Caco-2 (cell line): ENCODE measurements at regions of chr7 and their contacts with region 1.

Region 1: DNA sequence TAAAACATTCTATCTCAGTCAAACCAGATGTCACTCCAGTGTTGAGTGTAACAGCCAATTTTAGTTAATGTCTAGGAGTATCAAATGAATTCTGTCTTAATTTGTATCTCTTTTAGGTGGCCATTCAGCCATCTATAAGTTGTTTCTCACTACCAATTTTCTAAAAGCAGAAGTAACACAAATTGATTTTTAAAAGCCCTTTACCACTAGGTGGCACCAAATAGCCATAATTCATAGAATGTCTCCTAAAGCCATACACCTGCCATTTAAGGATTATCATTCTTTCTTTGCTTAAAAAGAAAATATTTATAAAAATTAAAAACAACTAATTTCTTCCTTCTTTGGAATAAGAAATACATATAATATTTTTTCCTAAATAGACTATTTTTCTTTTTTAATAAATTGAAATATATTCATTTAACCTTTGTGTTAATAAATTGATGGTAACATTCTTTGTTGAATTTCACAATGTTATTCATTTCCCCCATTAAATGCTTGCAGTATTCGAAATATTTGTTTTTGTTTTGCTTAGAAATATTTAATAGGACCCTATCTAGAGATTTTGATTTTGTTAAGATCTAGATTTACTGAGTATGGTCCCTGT is 107.8 kb upstream of the PPP1R3A start:
- DNase-seq: peak in 1 of 2 experiments; percentile 67
- H3K4me3 ChIP-seq: no peak overlapping the region
- H3K4me3 Mint-ChIP-seq: no peak overlapping the region
- H3K27ac Mint-ChIP-seq: no peak overlapping the region
- H3K4me1 ChIP-seq: no peaks in the 10 kb centered on the region
- H3K4me1 Mint-ChIP-seq: no peaks in the 10 kb centered on the region
- H3K27me3 ChIP-seq: no peaks in the 10 kb centered on the region
- H3K27me3 Mint-ChIP-seq: peaks cover 7% of the 10 kb centered on the region
- CTCF ChIP-seq: peak; percentile 49 to 71

Region 2: GRCh38 chr7:113774182-113774807 is 252.3 kb before region 1 on chr7:
- CTCF ChIA-PET with region 1: no interaction called
- POLR2A ChIA-PET with region 1: no interaction called
- intact Hi-C with region 1: loop called (anchors 5 kb)
- DNase-seq: peak in 1 of 2 experiments; percentile 6
- H3K4me3 ChIP-seq: no peak overlapping the region
- H3K4me3 Mint-ChIP-seq: no peak overlapping the region
- H3K27ac Mint-ChIP-seq: no peak overlapping the region
- H3K4me1 ChIP-seq: no peaks in the 10 kb centered on the region
- H3K4me1 Mint-ChIP-seq: no peaks in the 10 kb centered on the region
- H3K27me3 ChIP-seq: no peaks in the 10 kb centered on the region
- H3K27me3 Mint-ChIP-seq: no peaks in the 10 kb centered on the region
- CTCF ChIP-seq: peak; percentile 50 to 76

Region 3: DNA sequence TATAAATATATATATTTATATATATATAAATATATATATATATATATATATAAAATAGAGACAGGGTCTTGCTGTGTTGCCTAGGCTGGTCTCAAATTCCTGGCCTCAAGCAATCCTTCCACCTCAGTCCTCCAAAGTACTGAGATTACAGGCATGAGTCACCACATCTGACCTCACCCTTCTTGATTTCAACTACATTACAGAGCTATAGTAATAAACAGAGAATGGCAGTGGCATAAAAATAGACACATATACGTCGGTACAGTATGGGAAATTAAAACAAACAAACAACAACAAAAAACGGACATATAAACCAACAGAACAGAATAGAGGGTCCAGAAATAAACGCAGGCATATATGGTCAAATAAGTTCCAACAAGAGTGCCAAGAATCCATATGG is 30.2 kb before region 1 on chr7:
- CTCF ChIA-PET with region 1: no interaction called
- POLR2A ChIA-PET with region 1: no interaction called
- intact Hi-C with region 1: no loop called
- DNase-seq: no peak
- H3K4me3 ChIP-seq: no peak overlapping the region
- H3K4me3 Mint-ChIP-seq: no peak overlapping the region
- H3K27ac Mint-ChIP-seq: no peak overlapping the region
- H3K4me1 ChIP-seq: no peaks in the 10 kb centered on the region
- H3K4me1 Mint-ChIP-seq: no peaks in the 10 kb centered on the region
- H3K27me3 ChIP-seq: no peaks in the 10 kb centered on the region
- H3K27me3 Mint-ChIP-seq: no peaks in the 10 kb centered on the region
- CTCF ChIP-seq: no peak

Region 4: GRCh38 chr7:114217026-114217425 is 190.4 kb after region 1 on chr7:
- CTCF ChIA-PET with region 1: no interaction called
- POLR2A ChIA-PET with region 1: no interaction called
- intact Hi-C with region 1: loop called (anchors 5 kb)
- DNase-seq: no peak
- H3K4me3 ChIP-seq: no peak overlapping the region
- H3K4me3 Mint-ChIP-seq: no peak overlapping the region
- H3K27ac Mint-ChIP-seq: no peak overlapping the region
- H3K4me1 ChIP-seq: no peaks in the 10 kb centered on the region
- H3K4me1 Mint-ChIP-seq: no peaks in the 10 kb centered on the region
- H3K27me3 ChIP-seq: no peaks in the 10 kb centered on the region
- H3K27me3 Mint-ChIP-seq: no peaks in the 10 kb centered on the region
- CTCF ChIP-seq: peak; percentile 21 to 27

Region 5: GRCh38 chr7:114405427-114405826 is 378.8 kb after region 1 on chr7:
- CTCF ChIA-PET with region 1: no interaction called
- POLR2A ChIA-PET with region 1: no interaction called
- intact Hi-C with region 1: loop called (anchors 1 kb)
- DNase-seq: peak in 1 of 2 experiments; percentile 14
- H3K4me3 ChIP-seq: no peak overlapping the region
- H3K4me3 Mint-ChIP-seq: no peak overlapping the region
- H3K27ac Mint-ChIP-seq: no peak overlapping the region
- H3K4me1 ChIP-seq: no peaks in the 10 kb centered on the region
- H3K4me1 Mint-ChIP-seq: no peaks in the 10 kb centered on the region
- H3K27me3 ChIP-seq: no peaks in the 10 kb centered on the region
- H3K27me3 Mint-ChIP-seq: peaks cover 7% of the 10 kb centered on the region
- CTCF ChIP-seq: peak; percentile 44 to 45

Region 6: GRCh38 chr7:114539575-114539974 is 513.0 kb after region 1 on chr7:
- CTCF ChIA-PET with region 1: interaction called, 3 read pairs
- POLR2A ChIA-PET with region 1: no interaction called
- intact Hi-C with region 1: loop called (anchors 1 kb)
- DNase-seq: peak; percentile 32 to 39
- H3K4me3 ChIP-seq: no peak overlapping the region
- H3K4me3 Mint-ChIP-seq: no peak overlapping the region
- H3K27ac Mint-ChIP-seq: no peak overlapping the region
- H3K4me1 ChIP-seq: no peaks in the 10 kb centered on the region
- H3K4me1 Mint-ChIP-seq: no peaks in the 10 kb centered on the region
- H3K27me3 ChIP-seq: no peaks in the 10 kb centered on the region
- H3K27me3 Mint-ChIP-seq: peaks cover 3% of the 10 kb centered on the region
- CTCF ChIP-seq: peak; percentile 17 to 65

Region 7: DNA sequence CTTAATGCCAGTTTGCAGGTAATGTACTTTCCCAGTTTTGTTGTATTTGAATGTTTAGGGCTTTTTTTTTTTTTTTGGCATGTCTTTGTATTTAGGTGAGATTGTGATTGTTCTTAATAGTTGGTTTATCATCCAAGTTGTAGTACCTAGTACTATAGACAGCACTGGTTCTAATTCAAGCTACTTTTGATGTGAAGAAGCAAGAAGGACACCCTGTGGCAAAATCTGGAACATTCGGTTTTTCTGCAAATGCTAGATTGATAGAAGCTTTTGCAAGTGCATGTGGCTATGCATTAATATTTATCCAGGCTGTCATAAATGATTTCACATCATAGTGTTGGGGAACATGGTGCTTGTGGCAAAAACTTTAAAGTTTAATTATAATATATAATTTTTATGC is 636.9 kb after region 1 on chr7:
- CTCF ChIA-PET with region 1: no interaction called
- POLR2A ChIA-PET with region 1: no interaction called
- intact Hi-C with region 1: loop called (anchors 1 kb)
- DNase-seq: peak in 1 of 2 experiments; percentile 29
- H3K4me3 ChIP-seq: no peak overlapping the region
- H3K4me3 Mint-ChIP-seq: no peak overlapping the region
- H3K27ac Mint-ChIP-seq: no peak overlapping the region
- H3K4me1 ChIP-seq: no peaks in the 10 kb centered on the region
- H3K4me1 Mint-ChIP-seq: no peaks in the 10 kb centered on the region
- H3K27me3 ChIP-seq: no peaks in the 10 kb centered on the region
- H3K27me3 Mint-ChIP-seq: peaks cover 3% of the 10 kb centered on the region
- CTCF ChIP-seq: peak in 1 of 2 experiments; percentile 31